ENCODE measurements at regions of chr6 and their contacts with region 1.

Region 1: DNA sequence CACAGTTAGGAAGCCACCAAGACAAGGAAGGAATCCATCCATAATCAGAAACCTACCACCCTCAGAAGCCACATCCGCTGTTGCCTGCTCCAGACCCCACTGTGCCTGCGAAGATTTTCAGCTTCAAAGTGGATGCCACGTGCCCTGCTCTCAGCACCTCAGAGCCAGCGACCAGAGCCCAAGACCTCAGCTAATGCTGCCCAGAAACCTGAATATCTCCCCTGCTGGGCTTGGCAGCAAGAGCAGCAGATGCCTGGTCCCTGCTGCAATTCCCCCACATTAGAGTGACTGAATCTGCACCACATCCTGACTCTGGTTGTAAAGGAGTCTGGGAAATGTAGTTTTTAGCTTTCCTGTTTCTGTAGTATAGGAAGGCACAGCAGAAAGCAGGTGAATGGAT is 10.7 kb upstream of the ULBP3 start:
- DNase-seq: peak in 3 of 5 donors; percentile 56 to 60 (median 56)
- H3K4me3 ChIP-seq: no peak overlapping the region
- H3K4me3 Mint-ChIP-seq: peak overlapping the region in 5 of 7 donors; percentile 1 to 62 (median 37)
- H3K27ac ChIP-seq: no peak overlapping the region
- H3K27ac Mint-ChIP-seq: peak overlapping the region in 3 of 8 donors; percentile 24 to 56 (median 52)
- H3K4me1 ChIP-seq: peaks cover 9% of the 10 kb centered on the region
- H3K4me1 Mint-ChIP-seq: peaks cover 22 to 37% (median 34%) of the 10 kb centered on the region in 3 donors
- H3K27me3 ChIP-seq: no peaks in the 10 kb centered on the region
- H3K27me3 Mint-ChIP-seq: peaks cover 5 to 19% of the 10 kb centered on the region in 2 donors

Region 2: DNA sequence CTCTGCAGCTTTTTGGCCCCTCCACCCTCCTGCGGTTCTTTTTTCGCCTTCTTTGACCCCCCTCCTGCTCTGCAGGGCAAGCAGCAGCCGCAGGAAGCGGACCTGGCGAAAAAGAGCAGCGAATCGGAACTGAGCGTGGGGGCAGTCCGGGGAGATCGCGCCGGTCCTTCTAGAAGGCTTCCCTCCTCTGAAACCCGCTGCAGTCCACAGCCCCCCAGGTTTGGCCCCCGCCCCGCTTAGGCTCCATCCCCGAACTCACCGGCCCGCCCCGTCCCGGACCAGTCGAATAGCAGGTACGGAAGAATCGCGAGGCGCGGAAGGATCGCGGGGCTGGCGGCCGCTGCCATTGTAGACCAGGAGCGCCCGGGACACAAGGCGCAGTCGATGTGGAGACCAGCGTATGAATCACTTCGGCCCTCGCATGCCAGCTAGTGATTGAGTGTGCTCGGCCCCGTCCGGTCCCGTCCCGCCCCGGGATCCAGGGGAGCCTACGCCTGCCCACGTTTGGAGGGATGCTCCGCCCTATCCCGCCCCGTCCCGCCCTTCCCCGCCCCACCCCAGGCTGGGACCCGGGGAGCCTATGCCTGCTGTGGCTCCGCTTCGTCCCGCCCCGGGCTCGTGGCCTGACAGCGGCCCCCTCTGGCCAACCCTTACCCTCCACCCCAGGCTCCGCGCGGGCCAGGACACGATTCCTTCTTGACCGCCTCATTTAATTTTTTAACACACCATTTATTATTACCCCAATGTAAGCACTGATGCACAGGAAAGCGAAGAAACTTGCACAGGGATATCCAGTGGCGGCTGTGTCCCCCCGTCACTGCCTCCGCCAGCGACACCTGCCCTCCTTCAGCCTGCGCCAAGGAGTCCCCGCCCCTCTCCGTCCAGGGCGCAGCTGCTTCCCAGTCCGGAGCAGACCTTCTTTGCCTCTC is 10.6 kb before region 1 on chr6 and contains the start of gene ULBP3:
- CTCF ChIA-PET with region 1: interaction called, 31 read pairs
- POLR2A ChIA-PET with region 1: no interaction called
- DNase-seq: peak; percentile 50 to 71 (median 63)
- H3K4me3 ChIP-seq: peak within 1 kb of the TSS; percentile 57
- H3K4me3 Mint-ChIP-seq: peak within 1 kb of the TSS; percentile 85 to 94 (median 89)
- H3K27ac ChIP-seq: peak within 1 kb of the TSS; percentile 20
- H3K27ac Mint-ChIP-seq: peak within 1 kb of the TSS in 7 of 8 donors; percentile 29 to 76 (median 47)
- H3K4me1 ChIP-seq: peaks cover 7% of the 10 kb centered on the region
- H3K4me1 Mint-ChIP-seq: peaks cover 21 to 28% (median 26%) of the 10 kb centered on the region in 3 donors
- H3K27me3 ChIP-seq: no peaks in the 10 kb centered on the region
- H3K27me3 Mint-ChIP-seq: peaks cover 5 to 6% of the 10 kb centered on the region in 2 donors
- total RNA-seq, gene ULBP3: 1.2 to 1.6 TPM

Region 3: DNA sequence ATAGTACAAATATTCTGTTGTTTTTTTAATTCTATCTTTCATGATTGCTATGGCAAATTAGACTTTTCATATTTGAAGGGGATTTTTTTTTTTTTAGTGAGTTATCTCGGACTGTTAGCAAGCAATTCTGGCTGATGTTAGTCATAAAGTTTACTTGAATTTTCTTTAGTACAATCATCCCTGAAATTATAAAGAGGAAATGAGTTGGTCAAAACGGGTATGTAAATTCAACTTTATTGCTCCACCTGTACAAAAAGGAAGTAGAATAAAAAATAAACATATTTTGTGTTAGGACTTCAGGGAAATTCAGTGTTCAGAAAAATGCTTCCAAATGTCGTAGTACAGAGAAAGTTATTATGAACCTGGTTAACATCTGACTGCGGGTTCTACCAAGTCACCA is 103.5 kb after region 1 on chr6:
- CTCF ChIA-PET with region 1: no interaction called
- POLR2A ChIA-PET with region 1: no interaction called
- DNase-seq: no peak
- H3K4me3 ChIP-seq: no peak overlapping the region
- H3K4me3 Mint-ChIP-seq: no peak overlapping the region
- H3K27ac ChIP-seq: no peak overlapping the region
- H3K27ac Mint-ChIP-seq: no peak overlapping the region
- H3K4me1 ChIP-seq: no peaks in the 10 kb centered on the region
- H3K4me1 Mint-ChIP-seq: peaks cover 0 to 5% (median 0%) of the 10 kb centered on the region in 3 donors
- H3K27me3 ChIP-seq: no peaks in the 10 kb centered on the region
- H3K27me3 Mint-ChIP-seq: peaks cover 5 to 13% of the 10 kb centered on the region in 2 donors

Region 4: DNA sequence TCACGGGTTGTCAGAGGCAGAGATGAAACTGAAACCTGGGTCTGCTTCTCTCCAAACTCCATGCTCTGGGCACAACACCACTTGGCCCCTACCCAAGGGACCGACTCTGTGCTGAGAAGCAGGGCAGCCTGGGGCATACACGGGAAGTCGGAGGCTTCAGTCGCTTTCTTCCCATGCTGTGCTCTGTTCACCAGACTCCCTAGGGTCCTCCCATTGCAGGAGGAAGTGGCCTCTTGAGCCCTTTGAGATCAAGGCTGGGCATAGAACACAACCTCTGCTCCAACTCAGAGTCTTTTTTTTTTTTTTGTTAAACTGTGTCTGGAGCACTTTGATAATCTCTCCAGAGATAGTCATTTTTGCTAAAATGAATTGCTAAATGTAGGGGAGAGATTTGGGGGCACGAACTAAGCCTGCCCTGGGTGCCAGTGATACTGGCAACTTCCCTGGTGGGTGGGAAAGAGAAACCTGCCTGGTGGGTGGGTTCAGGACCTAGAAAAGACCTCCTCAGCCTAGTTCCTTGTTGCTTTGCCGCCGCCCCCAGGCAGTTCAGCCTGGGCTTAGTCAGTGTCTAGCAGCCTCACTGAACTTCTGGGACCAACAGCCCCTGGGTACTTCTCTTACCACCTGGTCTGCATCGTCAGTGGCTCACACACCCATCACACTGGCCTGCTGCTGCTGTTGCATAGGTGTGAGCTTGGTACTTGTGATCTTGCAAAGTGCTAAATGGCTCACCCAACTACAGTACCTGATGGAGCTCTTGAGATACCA is 125.3 kb after region 1 on chr6:
- CTCF ChIA-PET with region 1: no interaction called
- POLR2A ChIA-PET with region 1: no interaction called
- DNase-seq: no peak
- H3K4me3 ChIP-seq: no peak overlapping the region
- H3K4me3 Mint-ChIP-seq: no peak overlapping the region
- H3K27ac ChIP-seq: no peak overlapping the region
- H3K27ac Mint-ChIP-seq: no peak overlapping the region
- H3K4me1 ChIP-seq: no peaks in the 10 kb centered on the region
- H3K4me1 Mint-ChIP-seq: peaks cover 0 to 12% (median 9%) of the 10 kb centered on the region in 3 donors
- H3K27me3 ChIP-seq: no peaks in the 10 kb centered on the region
- H3K27me3 Mint-ChIP-seq: peaks cover 3% of the 10 kb centered on the region in 2 donors

Region 5: GRCh38 chr6:150334790-150335783 is 255.5 kb after region 1 on chr6:
- CTCF ChIA-PET with region 1: interaction called, 18 read pairs
- POLR2A ChIA-PET with region 1: no interaction called
- DNase-seq: peak in 3 of 5 donors; percentile 7 to 56 (median 39)
- H3K4me3 ChIP-seq: no peak overlapping the region
- H3K4me3 Mint-ChIP-seq: no peak overlapping the region
- H3K27ac ChIP-seq: no peak overlapping the region
- H3K27ac Mint-ChIP-seq: peak overlapping the region in 1 of 8 donors; percentile 36
- H3K4me1 ChIP-seq: no peaks in the 10 kb centered on the region
- H3K4me1 Mint-ChIP-seq: peaks cover 0 to 3% (median 0%) of the 10 kb centered on the region in 3 donors
- H3K27me3 ChIP-seq: no peaks in the 10 kb centered on the region
- H3K27me3 Mint-ChIP-seq: peaks cover 0 to 4% of the 10 kb centered on the region in 2 donors

Region 6: GRCh38 chr6:150395398-150396009 is 315.9 kb after region 1 on chr6:
- CTCF ChIA-PET with region 1: interaction called, 39 read pairs
- POLR2A ChIA-PET with region 1: no interaction called
- DNase-seq: peak; percentile 4 to 58 (median 13)
- H3K4me3 ChIP-seq: no peak overlapping the region
- H3K4me3 Mint-ChIP-seq: no peak overlapping the region
- H3K27ac ChIP-seq: no peak overlapping the region
- H3K27ac Mint-ChIP-seq: no peak overlapping the region
- H3K4me1 ChIP-seq: no peaks in the 10 kb centered on the region
- H3K4me1 Mint-ChIP-seq: no peaks in the 10 kb centered on the region
- H3K27me3 ChIP-seq: no peaks in the 10 kb centered on the region
- H3K27me3 Mint-ChIP-seq: peaks cover 10 to 33% of the 10 kb centered on the region in 2 donors

Measured in CD8-positive, alpha-beta memory T cell (primary cell).